ENCODE measurements at regions of chr1 and their contacts with region 1.

Region 1: DNA sequence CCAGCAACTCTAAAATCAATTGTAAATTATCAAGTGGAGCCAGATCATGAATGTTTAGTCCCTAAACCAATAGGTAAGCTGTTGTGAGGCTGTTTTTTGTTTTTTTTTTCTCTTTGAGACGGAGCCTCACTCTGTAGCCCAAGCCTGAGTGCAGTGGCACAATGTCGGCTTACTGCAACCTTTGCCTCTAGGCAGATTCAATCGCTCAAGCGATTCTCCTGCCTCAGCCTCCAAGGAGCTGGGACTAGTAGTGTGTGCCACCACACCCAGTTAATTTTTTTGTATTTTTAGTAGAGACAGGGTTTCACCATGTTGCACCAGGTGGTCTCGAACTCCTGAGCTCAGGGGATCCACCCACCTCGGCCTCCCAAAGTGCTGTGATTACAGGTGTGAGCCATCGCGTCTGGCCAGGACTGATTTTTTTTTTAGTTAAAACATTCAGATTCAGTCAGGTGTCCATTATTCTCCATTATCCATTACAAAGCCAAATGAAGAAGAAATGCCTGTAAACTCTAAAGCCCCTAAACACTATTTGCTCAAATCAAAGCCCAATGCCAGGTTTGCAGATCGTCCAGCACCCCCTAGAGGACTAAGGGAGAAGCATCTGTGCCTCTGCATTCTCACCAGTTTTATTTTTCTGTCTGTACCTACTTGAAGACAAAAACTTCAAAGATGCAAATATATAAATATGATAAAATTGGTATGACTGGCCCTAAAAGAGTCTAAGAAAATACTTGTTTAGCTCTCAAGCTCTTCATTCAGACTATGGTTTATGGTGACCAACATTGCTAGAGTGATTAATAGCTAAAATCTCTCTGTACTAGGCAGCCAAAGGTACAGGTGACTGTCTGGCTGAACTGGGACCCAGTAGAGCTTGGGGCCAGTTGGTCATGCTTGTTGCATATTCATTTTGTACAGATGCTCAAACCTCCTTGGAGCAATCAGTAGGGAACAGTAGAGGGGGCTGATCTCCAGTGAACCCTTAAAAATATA is 138.6 kb downstream of the SYT2 start:
- DNase-seq: peak in 1 of 2 donors; percentile 53
- ATAC-seq: peak; percentile 49 to 64 (median 59)
- H3K4me3 ChIP-seq: no peak overlapping the region
- H3K4me3 Mint-ChIP-seq: no peak overlapping the region
- H3K27ac ChIP-seq: no peak overlapping the region
- H3K27ac Mint-ChIP-seq: no peak overlapping the region
- H3K4me1 ChIP-seq: no peaks in the 10 kb centered on the region
- H3K4me1 Mint-ChIP-seq: peaks cover 8 to 9% of the 10 kb centered on the region in 2 donors
- H3K27me3 ChIP-seq: no peaks in the 10 kb centered on the region
- H3K27me3 Mint-ChIP-seq: no peaks in the 10 kb centered on the region
- CTCF ChIP-seq: peak; percentile 80

Region 2: DNA sequence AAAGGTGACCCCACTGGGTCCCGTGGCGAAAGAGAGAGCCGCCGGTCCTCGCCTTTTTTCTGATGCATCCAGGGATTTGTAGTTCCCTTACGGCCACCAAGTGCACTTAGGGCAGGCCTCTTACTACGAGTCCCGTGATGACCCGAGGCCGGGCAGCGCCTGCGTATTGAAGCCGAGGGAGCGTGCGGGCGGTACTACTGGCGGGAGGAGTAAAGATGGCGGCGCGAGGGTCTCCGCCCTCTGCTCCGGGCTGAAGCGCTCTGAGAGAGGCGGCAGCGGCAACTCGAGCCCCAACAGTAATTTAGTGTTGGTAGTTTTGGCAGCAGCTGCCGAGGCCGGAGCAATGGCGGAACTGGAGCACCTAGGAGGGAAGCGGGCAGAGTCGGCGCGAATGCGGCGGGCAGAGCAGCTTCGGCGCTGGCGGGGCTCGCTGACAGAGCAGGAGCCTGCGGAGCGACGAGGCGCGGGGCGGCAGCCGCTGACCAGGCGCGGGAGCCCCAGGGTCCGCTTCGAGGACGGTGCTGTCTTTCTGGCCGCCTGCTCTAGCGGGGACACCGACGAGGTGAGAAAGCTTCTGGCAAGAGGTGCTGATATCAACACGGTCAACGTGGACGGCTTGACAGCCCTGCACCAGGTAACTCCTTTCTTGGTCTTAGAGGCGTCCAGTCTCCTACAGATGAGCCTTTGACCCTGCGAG is 223.0 kb before region 1 on chr1 and contains the start of gene PPP1R12B:
- intact Hi-C with region 1: loop called (anchors 10 kb)
- DNase-seq: peak; percentile 90 to 97
- ATAC-seq: peak; percentile 96 to 99 (median 97)
- H3K4me3 ChIP-seq: peak within 1 kb of the TSS; percentile 98
- H3K4me3 Mint-ChIP-seq: peak within 1 kb of the TSS; percentile 99
- H3K27ac ChIP-seq: peak within 1 kb of the TSS; percentile 84
- H3K27ac Mint-ChIP-seq: peak within 1 kb of the TSS; percentile 92 to 96
- H3K4me1 ChIP-seq: peaks cover 10% of the 10 kb centered on the region
- H3K4me1 Mint-ChIP-seq: peaks cover 27 to 32% of the 10 kb centered on the region in 2 donors
- H3K27me3 ChIP-seq: no peaks in the 10 kb centered on the region
- H3K27me3 Mint-ChIP-seq: no peaks in the 10 kb centered on the region
- CTCF ChIP-seq: no peak
- total RNA-seq, gene PPP1R12B: 27.8 to 47.5 (median 46.5) TPM

Region 3: DNA sequence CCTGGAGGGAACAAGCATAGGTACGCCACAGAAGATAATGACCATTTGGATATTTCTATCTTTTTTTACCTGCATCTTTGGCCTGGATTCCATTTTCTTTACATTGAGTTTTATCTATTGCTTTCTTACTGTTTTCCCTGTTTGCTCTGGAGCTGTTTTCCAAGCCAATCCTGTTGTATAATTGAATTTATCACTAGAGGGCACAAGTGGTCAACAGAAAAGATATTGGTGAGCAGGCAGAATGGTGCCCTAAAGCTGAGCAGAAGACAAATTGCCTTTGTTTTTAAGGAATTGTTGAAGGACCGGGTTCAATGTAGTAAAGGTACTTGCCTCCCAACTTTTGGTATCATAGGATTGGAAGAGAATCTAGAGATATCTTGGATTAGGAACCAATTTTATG is 70.4 kb before region 1 on chr1:
- intact Hi-C with region 1: loop called (anchors 1 kb)
- DNase-seq: peak in 1 of 2 donors; percentile 24
- ATAC-seq: no peak
- H3K4me3 ChIP-seq: no peak overlapping the region
- H3K4me3 Mint-ChIP-seq: no peak overlapping the region
- H3K27ac ChIP-seq: no peak overlapping the region
- H3K27ac Mint-ChIP-seq: no peak overlapping the region
- H3K4me1 ChIP-seq: no peaks in the 10 kb centered on the region
- H3K4me1 Mint-ChIP-seq: no peaks in the 10 kb centered on the region
- H3K27me3 ChIP-seq: no peaks in the 10 kb centered on the region
- H3K27me3 Mint-ChIP-seq: no peaks in the 10 kb centered on the region
- CTCF ChIP-seq: peak; percentile 30